ENCODE measurements at regions of chr1 and their contacts with region 1.

Region 1: DNA sequence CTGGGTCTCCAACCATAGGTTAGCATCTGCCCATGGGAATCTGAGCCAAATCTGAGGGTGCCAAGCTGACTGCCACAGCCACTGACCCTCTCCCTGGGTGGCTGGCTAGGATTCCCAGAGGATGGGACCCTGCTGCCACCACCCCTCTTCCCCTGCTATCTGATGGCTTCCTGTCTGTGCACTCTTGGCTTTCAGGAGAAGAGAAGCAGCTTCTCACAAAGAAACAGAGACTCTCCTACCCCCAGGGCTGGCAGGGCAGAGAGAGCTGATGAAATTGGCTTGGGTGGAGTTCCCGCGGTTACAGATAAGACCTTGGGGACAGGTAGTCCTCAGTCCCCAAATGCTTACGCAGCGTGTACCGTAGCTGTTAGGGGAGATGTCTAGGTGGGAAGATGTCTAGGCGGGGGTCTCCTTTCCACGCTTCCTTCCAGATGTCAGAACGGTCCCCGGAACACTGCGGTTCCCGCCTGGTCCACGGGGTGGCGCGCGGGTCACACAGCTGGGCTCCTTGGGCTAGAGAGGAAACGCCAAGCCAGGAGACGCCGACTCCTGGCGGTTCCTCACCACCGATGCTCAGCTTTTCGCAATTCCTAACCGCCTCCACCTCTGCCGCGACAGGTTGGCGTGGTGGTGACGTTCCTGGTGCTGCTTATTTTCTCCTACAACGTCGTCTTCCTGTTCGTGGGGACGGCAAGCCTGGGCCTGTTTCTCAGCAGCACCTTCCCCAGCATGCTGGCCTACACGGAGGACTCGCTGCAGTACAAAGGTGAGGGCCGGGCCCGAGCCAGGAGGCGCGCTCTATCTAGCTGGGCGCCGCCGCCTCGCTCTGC is 40.1 kb downstream of the ELK4 start:
- DNase-seq: peak; percentile 97
- H3K4me3 Mint-ChIP-seq: peak overlapping the region; percentile 91
- H3K27ac Mint-ChIP-seq: peak overlapping the region; percentile 92
- H3K4me1 Mint-ChIP-seq: peaks cover 44% of the 10 kb centered on the region
- H3K27me3 Mint-ChIP-seq: no peaks in the 10 kb centered on the region

Region 2: DNA sequence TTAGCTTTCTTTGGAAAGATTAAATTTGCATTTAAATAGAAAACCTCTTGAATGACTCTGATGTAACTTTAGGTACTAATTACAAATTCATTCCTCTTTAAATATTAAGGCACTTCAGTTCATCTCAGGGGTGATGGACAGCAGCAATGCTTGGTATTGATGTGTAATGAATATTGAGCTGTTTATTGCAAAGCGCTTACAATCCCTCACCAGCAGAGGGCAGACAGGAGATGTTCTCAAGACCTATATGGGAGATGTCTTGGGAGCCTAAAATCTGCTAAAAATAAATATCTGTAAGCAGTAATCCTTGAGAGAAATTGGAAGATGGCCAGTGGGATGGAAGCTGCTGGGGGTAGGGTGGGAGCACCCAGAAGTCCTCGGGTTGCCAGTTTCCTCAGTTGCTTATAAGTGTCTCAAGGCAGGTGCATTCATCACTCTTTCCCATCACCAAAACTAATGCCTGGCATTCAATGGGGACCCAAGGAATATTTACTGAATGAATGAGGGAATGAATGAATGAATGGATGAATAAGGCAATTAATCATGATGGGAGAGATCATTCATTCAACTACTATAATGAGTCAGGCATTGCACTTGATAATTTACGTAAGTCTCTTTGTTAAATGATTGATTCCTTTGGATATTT is 237.4 kb before region 1 on chr1:
- intact Hi-C with region 1: no loop called
- DNase-seq: peak; percentile 87
- H3K4me3 Mint-ChIP-seq: no peak overlapping the region
- H3K27ac Mint-ChIP-seq: no peak overlapping the region
- H3K4me1 Mint-ChIP-seq: no peaks in the 10 kb centered on the region
- H3K27me3 Mint-ChIP-seq: peaks cover 26% of the 10 kb centered on the region

Region 3: GRCh38 chr1:205711104-205712020 is 119.6 kb after region 1 on chr1:
- intact Hi-C with region 1: loop called (anchors 5 kb)
- DNase-seq: peak; percentile 90
- H3K4me3 Mint-ChIP-seq: no peak overlapping the region
- H3K27ac Mint-ChIP-seq: peak overlapping the region; percentile 44
- H3K4me1 Mint-ChIP-seq: peaks cover 19% of the 10 kb centered on the region
- H3K27me3 Mint-ChIP-seq: no peaks in the 10 kb centered on the region

Measured in activated CD4-positive, alpha-beta T cell treated with anti-CD3 and anti-CD28 coated beads, Interleukin-2, amount 10 ng/mL, durations not matched to agents 24 days and 14 days (primary cell).